Caco-2 (cell line): ENCODE measurements at regions of chr4 and their contacts with region 1.

Region 1: GRCh38 chr4:77385124-77385969 is 220.3 kb upstream of the CXCL13 start:
- DNase-seq: peak; percentile 58 to 66
- H3K4me3 ChIP-seq: no peak overlapping the region
- H3K4me3 Mint-ChIP-seq: no peak overlapping the region
- H3K27ac Mint-ChIP-seq: no peak overlapping the region
- H3K4me1 ChIP-seq: no peaks in the 10 kb centered on the region
- H3K4me1 Mint-ChIP-seq: no peaks in the 10 kb centered on the region
- H3K27me3 ChIP-seq: no peaks in the 10 kb centered on the region
- H3K27me3 Mint-ChIP-seq: peaks cover 6% of the 10 kb centered on the region
- CTCF ChIP-seq: peak; percentile 72 to 82

Region 2: DNA sequence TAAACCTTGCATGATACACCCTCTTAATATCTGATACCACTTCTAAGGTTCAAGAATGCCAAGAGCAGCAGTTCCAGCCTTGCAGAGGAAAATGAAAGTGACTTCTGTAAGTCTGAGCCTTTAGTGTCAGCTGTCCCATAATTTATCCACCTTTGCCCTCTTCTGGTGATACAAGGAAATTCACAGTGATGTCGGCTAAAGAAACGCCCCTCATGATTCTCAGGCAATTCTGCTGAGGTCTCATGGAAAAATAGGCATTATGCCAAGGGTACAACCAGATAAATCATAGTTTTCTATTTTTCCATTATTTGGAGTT is 48.0 kb after region 1 on chr4:
- CTCF ChIA-PET with region 1: no interaction called
- POLR2A ChIA-PET with region 1: no interaction called
- intact Hi-C with region 1: loop called (anchors 1 kb)
- DNase-seq: peak in 1 of 2 experiments; percentile 39
- H3K4me3 ChIP-seq: no peak overlapping the region
- H3K4me3 Mint-ChIP-seq: no peak overlapping the region
- H3K27ac Mint-ChIP-seq: no peak overlapping the region
- H3K4me1 ChIP-seq: no peaks in the 10 kb centered on the region
- H3K4me1 Mint-ChIP-seq: no peaks in the 10 kb centered on the region
- H3K27me3 ChIP-seq: no peaks in the 10 kb centered on the region
- H3K27me3 Mint-ChIP-seq: peaks cover 2% of the 10 kb centered on the region
- CTCF ChIP-seq: peak; percentile 43 to 52

Region 3: GRCh38 chr4:77473509-77473908 is 88.2 kb after region 1 on chr4:
- CTCF ChIA-PET with region 1: no interaction called
- POLR2A ChIA-PET with region 1: no interaction called
- intact Hi-C with region 1: loop called (anchors 1 kb)
- DNase-seq: peak in 1 of 2 experiments; percentile 8
- H3K4me3 ChIP-seq: no peak overlapping the region
- H3K4me3 Mint-ChIP-seq: no peak overlapping the region
- H3K27ac Mint-ChIP-seq: no peak overlapping the region
- H3K4me1 ChIP-seq: no peaks in the 10 kb centered on the region
- H3K4me1 Mint-ChIP-seq: no peaks in the 10 kb centered on the region
- H3K27me3 ChIP-seq: no peaks in the 10 kb centered on the region
- H3K27me3 Mint-ChIP-seq: peaks cover 14% of the 10 kb centered on the region
- CTCF ChIP-seq: peak; percentile 12 to 36

Region 4: DNA sequence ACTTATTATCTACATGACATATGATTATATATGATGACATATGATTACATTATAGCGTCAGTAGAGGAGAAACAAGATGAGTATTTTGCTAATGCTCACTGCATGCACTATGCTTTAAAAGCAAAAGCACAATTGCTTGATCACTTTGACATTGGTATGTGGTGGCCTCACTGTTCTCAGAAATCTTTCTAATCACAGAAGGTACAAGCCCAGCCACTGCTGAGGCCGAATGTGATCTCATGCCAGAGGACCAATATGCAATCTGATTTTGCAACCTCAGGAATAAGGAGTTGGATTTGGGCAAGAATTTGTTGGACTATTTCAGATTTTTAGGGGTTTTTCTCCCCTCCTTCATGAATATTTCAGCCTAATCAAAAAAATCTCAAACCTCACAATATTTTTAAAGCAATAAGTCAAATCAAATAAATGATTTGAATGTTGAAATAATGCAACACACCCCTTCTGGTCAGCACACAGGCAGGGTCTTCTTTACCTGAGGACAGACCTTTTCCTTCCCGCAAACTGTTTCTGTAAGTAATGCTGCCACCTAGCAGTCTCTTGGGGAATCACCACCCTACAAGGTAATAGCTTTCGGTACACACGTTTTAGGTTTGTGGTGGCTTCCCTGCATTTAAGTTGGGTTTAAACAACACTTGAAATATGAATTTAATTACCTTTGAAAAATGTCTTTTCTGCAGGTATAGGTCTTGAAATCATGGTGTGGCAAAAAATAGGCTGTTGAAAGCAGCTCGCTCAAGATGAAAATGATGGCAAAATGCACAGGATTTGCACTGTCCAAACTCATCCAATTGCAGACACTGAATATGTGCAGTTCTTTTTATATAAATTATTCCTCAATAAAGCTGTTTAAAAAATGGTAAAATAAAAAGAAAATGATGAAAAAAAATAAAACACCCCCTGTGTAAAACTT is 215.4 kb after region 1 on chr4:
- CTCF ChIA-PET with region 1: no interaction called
- POLR2A ChIA-PET with region 1: no interaction called
- intact Hi-C with region 1: loop called (anchors 1 kb)
- DNase-seq: peak in 1 of 2 experiments; percentile 35
- H3K4me3 ChIP-seq: no peak overlapping the region
- H3K4me3 Mint-ChIP-seq: no peak overlapping the region
- H3K27ac Mint-ChIP-seq: no peak overlapping the region
- H3K4me1 ChIP-seq: no peaks in the 10 kb centered on the region
- H3K4me1 Mint-ChIP-seq: no peaks in the 10 kb centered on the region
- H3K27me3 ChIP-seq: no peaks in the 10 kb centered on the region
- H3K27me3 Mint-ChIP-seq: peaks cover 15% of the 10 kb centered on the region
- CTCF ChIP-seq: peak; percentile 61 to 79

Region 5: GRCh38 chr4:77618383-77619122 is 233.2 kb after region 1 on chr4:
- CTCF ChIA-PET with region 1: no interaction called
- POLR2A ChIA-PET with region 1: no interaction called
- intact Hi-C with region 1: loop called (anchors 5 kb)
- DNase-seq: peak; percentile 65 to 73
- H3K4me3 ChIP-seq: no peak overlapping the region
- H3K4me3 Mint-ChIP-seq: no peak overlapping the region
- H3K27ac Mint-ChIP-seq: no peak overlapping the region
- H3K4me1 ChIP-seq: no peaks in the 10 kb centered on the region
- H3K4me1 Mint-ChIP-seq: no peaks in the 10 kb centered on the region
- H3K27me3 ChIP-seq: no peaks in the 10 kb centered on the region; the same call in 1 of the 2 replicates
- H3K27me3 Mint-ChIP-seq: peaks cover 7% of the 10 kb centered on the region
- CTCF ChIP-seq: peak; percentile 69 to 84

Region 6: GRCh38 chr4:77697860-77698590 is 312.7 kb after region 1 on chr4:
- CTCF ChIA-PET with region 1: no interaction called
- POLR2A ChIA-PET with region 1: no interaction called
- intact Hi-C with region 1: loop called (anchors 5 kb)
- DNase-seq: peak in 1 of 2 experiments; percentile 24
- H3K4me3 ChIP-seq: no peak overlapping the region
- H3K4me3 Mint-ChIP-seq: no peak overlapping the region
- H3K27ac Mint-ChIP-seq: no peak overlapping the region
- H3K4me1 ChIP-seq: peaks cover 25% of the 10 kb centered on the region
- H3K4me1 Mint-ChIP-seq: peaks cover 7% of the 10 kb centered on the region
- H3K27me3 ChIP-seq: no peaks in the 10 kb centered on the region
- H3K27me3 Mint-ChIP-seq: no peaks in the 10 kb centered on the region
- CTCF ChIP-seq: no peak